Activated CD4-positive, alpha-beta T cell treated with anti-CD3 and anti-CD28 coated beads for 36 hours (primary cell): ENCODE measurements at regions of chr6 and their contacts with region 1.

Region 1: DNA sequence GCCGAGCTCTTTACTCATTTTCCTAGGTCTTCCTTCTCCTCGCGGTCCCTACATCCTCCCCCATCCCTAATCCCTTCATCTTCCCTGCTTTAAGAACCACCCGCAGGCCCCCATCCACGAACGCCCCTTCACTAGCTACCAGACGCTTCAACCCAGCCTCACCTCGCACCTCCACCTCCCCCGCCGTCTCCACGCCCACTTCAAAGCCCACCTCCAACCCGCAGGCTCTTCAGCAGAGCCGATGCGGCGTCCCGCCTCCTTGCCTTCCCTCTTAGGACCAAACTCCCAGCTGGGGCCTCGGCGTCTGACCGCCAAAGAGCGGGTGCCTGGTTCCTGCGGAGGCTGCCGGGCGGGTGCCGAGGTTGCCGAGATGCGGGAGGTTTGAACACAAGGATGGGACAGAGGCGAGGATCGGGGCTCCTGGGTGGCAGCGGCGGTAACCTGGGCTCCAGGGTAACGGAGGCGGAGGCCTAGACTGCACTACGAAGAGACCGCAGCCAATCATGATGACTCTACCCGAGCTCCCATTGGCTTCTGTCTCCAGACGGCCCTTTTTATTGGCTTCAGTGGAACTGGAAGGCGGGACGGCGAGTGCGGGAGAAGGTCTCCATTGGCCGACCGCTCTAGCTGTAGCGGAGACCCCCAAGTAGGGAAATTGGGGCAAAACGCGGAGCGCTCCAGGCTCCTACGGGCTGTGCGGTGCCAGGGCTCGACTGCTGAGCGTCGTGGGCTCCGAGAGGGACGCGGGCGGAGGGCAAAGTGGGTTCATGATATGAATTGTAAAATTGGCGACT is at the start of gene LCA5:
- DNase-seq: peak; percentile 90
- ATAC-seq: peak; percentile 100
- H3K4me3 Mint-ChIP-seq: no peak within 1 kb of the TSS
- H3K27ac Mint-ChIP-seq: no peak within 1 kb of the TSS
- H3K4me1 Mint-ChIP-seq: no peaks in the 10 kb centered on the region
- H3K27me3 Mint-ChIP-seq: peaks cover 8% of the 10 kb centered on the region
- total RNA-seq, gene LCA5: 0.25 to 0.32 TPM

Region 2: GRCh38 chr6:78867370-78868040 is 669.6 kb before region 1 on chr6 and contains the start of gene IRAK1BP1:
- CTCF ChIA-PET with region 1: no interaction called
- POLR2A ChIA-PET with region 1: no interaction called
- intact Hi-C with region 1: loop called in 1 of 2 experiments (anchors 2 kb)
- DNase-seq: peak; percentile 93
- ATAC-seq: peak; percentile 99
- H3K4me3 Mint-ChIP-seq: peak within 1 kb of the TSS; percentile 92
- H3K27ac Mint-ChIP-seq: peak within 1 kb of the TSS; percentile 79
- H3K4me1 Mint-ChIP-seq: peaks cover 15% of the 10 kb centered on the region
- H3K27me3 Mint-ChIP-seq: no peaks in the 10 kb centered on the region
- total RNA-seq, gene IRAK1BP1: 1.6 to 2.7 TPM

Region 3: GRCh38 chr6:79257381-79258205 is 279.6 kb before region 1 on chr6:
- CTCF ChIA-PET with region 1: no interaction called
- POLR2A ChIA-PET with region 1: no interaction called
- intact Hi-C with region 1: no loop called
- DNase-seq: peak; percentile 22
- ATAC-seq: no peak
- H3K4me3 Mint-ChIP-seq: no peak overlapping the region
- H3K27ac Mint-ChIP-seq: no peak overlapping the region
- H3K4me1 Mint-ChIP-seq: no peaks in the 10 kb centered on the region
- H3K27me3 Mint-ChIP-seq: peaks cover 13% of the 10 kb centered on the region